ENCODE measurements at regions of chr7 and their contacts with region 1.

Region 1: GRCh38 chr7:67625257-67625737 is 628.7 kb downstream of the TYW1 start:
- DNase-seq: peak; percentile 93
- H3K4me3 ChIP-seq: peak overlapping the region; percentile 38 to 52 (median 41)
- H3K27ac ChIP-seq: no peak overlapping the region
- H3K4me1 ChIP-seq: peaks cover 4 to 11% (median 8%) of the 10 kb centered on the region in 4 donors
- H3K27me3 ChIP-seq: peaks cover 0 to 6% (median 0%) of the 10 kb centered on the region in 4 donors
- CTCF ChIP-seq: peak; percentile 81 to 90 (median 88)
- EP300 ChIP-seq: no peak
- POLR2A ChIP-seq: no peak

Region 2: GRCh38 chr7:67377939-67378862 is 247.1 kb before region 1 on chr7:
- intact Hi-C with region 1: loop called (anchors 5 kb)
- DNase-seq: no peak
- H3K4me3 ChIP-seq: no peak overlapping the region
- H3K27ac ChIP-seq: no peak overlapping the region
- H3K4me1 ChIP-seq: peaks cover 0 to 18% (median 15%) of the 10 kb centered on the region in 4 donors
- H3K27me3 ChIP-seq: no peaks in the 10 kb centered on the region
- CTCF ChIP-seq: peak; percentile 77 to 86 (median 78)
- EP300 ChIP-seq: no peak
- POLR2A ChIP-seq: no peak